CD4-positive, alpha-beta memory T cell (primary cell): ENCODE measurements at regions of chrX and their contacts with region 1.

Region 1: GRCh38 chrX:40647307-40648197 is at the start of gene CXorf38:
- DNase-seq: peak; percentile 92 to 98 (median 96)
- H3K4me3 ChIP-seq: peak within 1 kb of the TSS; percentile 57 to 66
- H3K4me3 Mint-ChIP-seq: peak within 1 kb of the TSS; percentile 92 to 99 (median 97)
- H3K27ac ChIP-seq: peak within 1 kb of the TSS; percentile 84
- H3K27ac Mint-ChIP-seq: peak within 1 kb of the TSS; percentile 93 to 99 (median 98)
- H3K4me1 ChIP-seq: peaks cover 34% of the 10 kb centered on the region
- H3K4me1 Mint-ChIP-seq: peaks cover 18 to 55% (median 29%) of the 10 kb centered on the region in 4 donors
- H3K27me3 ChIP-seq: no peaks in the 10 kb centered on the region
- H3K27me3 Mint-ChIP-seq: no peaks in the 10 kb centered on the region
- total RNA-seq, gene CXorf38: 25.7 to 26.7 TPM

Region 2: GRCh38 chrX:39491548-39492297 is 1155.8 kb before region 1 on chrX:
- CTCF ChIA-PET with region 1: no interaction called
- POLR2A ChIA-PET with region 1: no interaction called
- intact Hi-C with region 1: no loop called
- DNase-seq: peak; percentile 40 to 58 (median 49)
- H3K4me3 ChIP-seq: no peak overlapping the region
- H3K4me3 Mint-ChIP-seq: peak overlapping the region in 7 of 8 donors; percentile 37 to 78 (median 67)
- H3K27ac ChIP-seq: no peak overlapping the region
- H3K27ac Mint-ChIP-seq: peak overlapping the region in 5 of 7 donors; percentile 9 to 81 (median 58)
- H3K4me1 ChIP-seq: peaks cover 21% of the 10 kb centered on the region
- H3K4me1 Mint-ChIP-seq: peaks cover 11 to 32% (median 19%) of the 10 kb centered on the region in 4 donors
- H3K27me3 ChIP-seq: no peaks in the 10 kb centered on the region
- H3K27me3 Mint-ChIP-seq: no peaks in the 10 kb centered on the region

Region 3: DNA sequence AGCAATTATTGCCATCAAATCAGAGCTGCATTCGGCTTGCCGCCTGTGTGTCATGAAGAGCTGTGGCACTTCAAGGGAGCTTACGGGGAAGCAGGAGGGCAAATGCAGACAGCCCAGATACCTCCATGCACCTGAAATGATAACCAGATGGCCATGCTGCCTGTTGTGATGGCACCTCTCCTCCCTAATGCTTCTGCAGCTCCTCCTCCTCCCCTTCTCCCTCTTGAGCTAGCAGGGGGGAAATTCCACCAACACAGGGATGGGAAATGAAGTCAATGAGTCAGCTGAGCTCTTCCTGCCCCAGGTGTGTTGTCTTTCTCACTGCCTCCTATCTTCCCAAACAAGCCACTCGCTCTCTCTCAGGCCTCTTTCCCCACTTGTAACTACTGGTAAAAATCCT is 1114.8 kb before region 1 on chrX:
- CTCF ChIA-PET with region 1: no interaction called
- POLR2A ChIA-PET with region 1: no interaction called
- intact Hi-C with region 1: no loop called
- DNase-seq: no peak
- H3K4me3 ChIP-seq: no peak overlapping the region
- H3K4me3 Mint-ChIP-seq: no peak overlapping the region
- H3K27ac ChIP-seq: no peak overlapping the region
- H3K27ac Mint-ChIP-seq: no peak overlapping the region
- H3K4me1 ChIP-seq: no peaks in the 10 kb centered on the region
- H3K4me1 Mint-ChIP-seq: no peaks in the 10 kb centered on the region
- H3K27me3 ChIP-seq: no peaks in the 10 kb centered on the region
- H3K27me3 Mint-ChIP-seq: peaks cover 0 to 4% of the 10 kb centered on the region in 2 donors

Region 4: GRCh38 chrX:40539214-40540142 is 108.1 kb before region 1 on chrX:
- CTCF ChIA-PET with region 1: interaction called, 26 read pairs
- POLR2A ChIA-PET with region 1: no interaction called
- intact Hi-C with region 1: loop called (anchors 2 kb)
- DNase-seq: peak; percentile 68 to 78 (median 73)
- H3K4me3 ChIP-seq: no peak overlapping the region
- H3K4me3 Mint-ChIP-seq: peak overlapping the region in 7 of 8 donors; percentile 26 to 68 (median 56)
- H3K27ac ChIP-seq: no peak overlapping the region
- H3K27ac Mint-ChIP-seq: peak overlapping the region; percentile 29 to 87 (median 77)
- H3K4me1 ChIP-seq: peaks cover 12% of the 10 kb centered on the region
- H3K4me1 Mint-ChIP-seq: peaks cover 12 to 20% (median 17%) of the 10 kb centered on the region in 4 donors
- H3K27me3 ChIP-seq: no peaks in the 10 kb centered on the region
- H3K27me3 Mint-ChIP-seq: no peaks in the 10 kb centered on the region

Region 5: GRCh38 chrX:40663880-40664633 is 16.5 kb after region 1 on chrX:
- CTCF ChIA-PET with region 1: interaction called, 11 read pairs
- POLR2A ChIA-PET with region 1: no interaction called
- intact Hi-C with region 1: no loop called
- DNase-seq: no peak
- H3K4me3 ChIP-seq: no peak overlapping the region
- H3K4me3 Mint-ChIP-seq: no peak overlapping the region
- H3K27ac ChIP-seq: no peak overlapping the region
- H3K27ac Mint-ChIP-seq: peak overlapping the region in 4 of 7 donors; percentile 0 to 82 (median 46)
- H3K4me1 ChIP-seq: peaks cover 11% of the 10 kb centered on the region
- H3K4me1 Mint-ChIP-seq: peaks cover 2 to 12% (median 5%) of the 10 kb centered on the region in 4 donors
- H3K27me3 ChIP-seq: no peaks in the 10 kb centered on the region
- H3K27me3 Mint-ChIP-seq: no peaks in the 10 kb centered on the region

Region 6: GRCh38 chrX:40792433-40792832 is 144.9 kb after region 1 on chrX:
- CTCF ChIA-PET with region 1: interaction called, 88 read pairs
- POLR2A ChIA-PET with region 1: no interaction called
- intact Hi-C with region 1: loop called (anchors 1 kb)
- DNase-seq: no peak
- H3K4me3 ChIP-seq: no peak overlapping the region
- H3K4me3 Mint-ChIP-seq: no peak overlapping the region
- H3K27ac ChIP-seq: no peak overlapping the region
- H3K27ac Mint-ChIP-seq: no peak overlapping the region
- H3K4me1 ChIP-seq: no peaks in the 10 kb centered on the region
- H3K4me1 Mint-ChIP-seq: peaks cover 0 to 7% (median 3%) of the 10 kb centered on the region in 4 donors
- H3K27me3 ChIP-seq: no peaks in the 10 kb centered on the region
- H3K27me3 Mint-ChIP-seq: peaks cover 3 to 4% of the 10 kb centered on the region in 2 donors

Region 7: GRCh38 chrX:41116948-41117347 is 469.4 kb after region 1 on chrX:
- CTCF ChIA-PET with region 1: interaction called, 10 read pairs
- POLR2A ChIA-PET with region 1: interaction called, 5 read pairs
- intact Hi-C with region 1: loop called (anchors 5 kb)
- DNase-seq: peak; percentile 44 to 57 (median 50)
- H3K4me3 ChIP-seq: no peak overlapping the region
- H3K4me3 Mint-ChIP-seq: peak overlapping the region; percentile 46 to 80 (median 62)
- H3K27ac ChIP-seq: peak overlapping the region; percentile 26
- H3K27ac Mint-ChIP-seq: peak overlapping the region; percentile 2 to 90 (median 59)
- H3K4me1 ChIP-seq: peaks cover 82% of the 10 kb centered on the region
- H3K4me1 Mint-ChIP-seq: peaks cover 45 to 81% (median 63%) of the 10 kb centered on the region in 4 donors
- H3K27me3 ChIP-seq: no peaks in the 10 kb centered on the region
- H3K27me3 Mint-ChIP-seq: no peaks in the 10 kb centered on the region

Region 8: DNA sequence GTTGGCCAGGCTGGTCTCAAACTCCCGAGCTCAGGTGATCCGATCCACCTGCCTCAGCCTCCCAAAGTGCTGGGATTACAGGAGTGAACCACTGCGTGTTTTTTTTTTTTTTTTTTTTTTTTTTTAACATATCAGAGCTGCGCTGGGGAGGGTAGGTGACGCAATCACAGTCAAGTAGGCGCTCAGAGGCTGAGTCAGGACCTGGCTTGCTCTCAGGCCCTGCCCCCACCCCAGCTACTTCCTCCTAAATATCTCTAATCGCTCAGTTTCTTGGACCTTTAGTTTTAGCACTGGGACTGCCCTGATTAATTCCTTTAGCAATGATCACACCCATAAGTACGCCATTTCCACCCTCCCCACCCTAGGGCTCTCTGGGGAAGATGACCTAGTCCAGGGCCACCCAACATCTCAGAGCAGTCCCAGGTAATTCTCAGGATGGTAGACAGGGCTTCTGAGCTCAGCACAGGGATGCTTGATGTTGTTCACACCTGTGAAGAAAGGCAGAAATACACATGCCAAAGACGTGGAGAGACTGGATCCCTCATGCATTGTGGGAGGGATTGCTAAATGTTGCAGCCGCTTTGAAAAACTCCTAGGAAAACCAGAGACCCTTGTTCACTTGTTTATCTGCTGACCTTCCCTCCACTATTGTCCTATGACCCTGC is 736.6 kb after region 1 on chrX:
- CTCF ChIA-PET with region 1: no interaction called
- POLR2A ChIA-PET with region 1: no interaction called
- intact Hi-C with region 1: loop called (anchors 5 kb)
- DNase-seq: peak; percentile 33 to 79 (median 53)
- H3K4me3 ChIP-seq: no peak overlapping the region
- H3K4me3 Mint-ChIP-seq: peak overlapping the region; percentile 53 to 92 (median 80)
- H3K27ac ChIP-seq: no peak overlapping the region
- H3K27ac Mint-ChIP-seq: peak overlapping the region; percentile 58 to 97 (median 94)
- H3K4me1 ChIP-seq: peaks cover 21% of the 10 kb centered on the region
- H3K4me1 Mint-ChIP-seq: peaks cover 12 to 21% (median 15%) of the 10 kb centered on the region in 4 donors
- H3K27me3 ChIP-seq: no peaks in the 10 kb centered on the region
- H3K27me3 Mint-ChIP-seq: no peaks in the 10 kb centered on the region